CD4-positive, alpha-beta T cell (primary cell): ENCODE measurements at regions of chr17 and their contacts with region 1.

Region 1: GRCh38 chr17:34961093-34961911 is at the starts of genes CCT6B and ZNF830:
- DNase-seq: peak; percentile 81 to 97 (median 85)
- ATAC-seq: peak; percentile 89
- H3K4me3 ChIP-seq: peak within 1 kb of the TSS; percentile 87
- H3K4me3 Mint-ChIP-seq: peak within 1 kb of the TSS; percentile 100
- H3K27ac ChIP-seq: peak within 1 kb of the TSS; percentile 96
- H3K27ac Mint-ChIP-seq: peak within 1 kb of the TSS; percentile 95
- H3K4me1 ChIP-seq: peaks cover 18% of the 10 kb centered on the region
- H3K4me1 Mint-ChIP-seq: peaks cover 30% of the 10 kb centered on the region
- H3K27me3 ChIP-seq: no peaks in the 10 kb centered on the region
- H3K27me3 Mint-ChIP-seq: peaks cover 8% of the 10 kb centered on the region
- CTCF ChIP-seq: no peak
- total RNA-seq, gene CCT6B: 4.6 to 4.9 TPM
- total RNA-seq, gene ZNF830: 34.4 to 39.0 TPM

Region 2: GRCh38 chr17:34740565-34741520 is 220.5 kb before region 1 on chr17:
- CTCF ChIA-PET with region 1: no interaction called
- POLR2A ChIA-PET with region 1: no interaction called
- intact Hi-C with region 1: no loop called
- DNase-seq: no peak
- ATAC-seq: no peak
- H3K4me3 ChIP-seq: no peak overlapping the region
- H3K4me3 Mint-ChIP-seq: no peak overlapping the region
- H3K27ac ChIP-seq: no peak overlapping the region
- H3K27ac Mint-ChIP-seq: no peak overlapping the region
- H3K4me1 ChIP-seq: no peaks in the 10 kb centered on the region
- H3K4me1 Mint-ChIP-seq: no peaks in the 10 kb centered on the region
- H3K27me3 ChIP-seq: no peaks in the 10 kb centered on the region
- H3K27me3 Mint-ChIP-seq: peaks cover 13% of the 10 kb centered on the region
- CTCF ChIP-seq: no peak

Region 3: GRCh38 chr17:34980681-34981537 is 19.6 kb after region 1 on chr17:
- CTCF ChIA-PET with region 1: interaction called, 9 read pairs
- POLR2A ChIA-PET with region 1: interaction called, 37 read pairs
- intact Hi-C with region 1: loop called (anchors 1 kb)
- DNase-seq: peak; percentile 38 to 91 (median 66)
- ATAC-seq: peak; percentile 80
- H3K4me3 ChIP-seq: peak overlapping the region; percentile 90
- H3K4me3 Mint-ChIP-seq: peak overlapping the region; percentile 94
- H3K27ac ChIP-seq: peak overlapping the region; percentile 92 to 97
- H3K27ac Mint-ChIP-seq: peak overlapping the region; percentile 88
- H3K4me1 ChIP-seq: peaks cover 26% of the 10 kb centered on the region
- H3K4me1 Mint-ChIP-seq: peaks cover 56% of the 10 kb centered on the region
- H3K27me3 ChIP-seq: no peaks in the 10 kb centered on the region
- H3K27me3 Mint-ChIP-seq: no peaks in the 10 kb centered on the region
- CTCF ChIP-seq: peak; percentile 56